Activated T-helper 1 cell treated with anti-CD3 and anti-CD28 coated beads, Interleukin-12 subunit alpha, Interleukin-12 subunit beta, Interleukin-2, Interleukin-4 antibody, amounts not matched to agents 30 ng/mL and 10 ng/mL and 1 ng/mL, durations not matched to agents 14 hours and 24 hours and 36 hours (primary cell): ENCODE measurements at regions of chr16 and their contacts with region 1.

Region 1: GRCh38 chr16:70438969-70439862 is at the start of gene ST3GAL2:
- DNase-seq: peak; percentile 92
- H3K4me3 Mint-ChIP-seq: peak within 1 kb of the TSS; percentile 98
- H3K27ac Mint-ChIP-seq: peak within 1 kb of the TSS; percentile 92
- H3K4me1 Mint-ChIP-seq: peaks cover 28% of the 10 kb centered on the region
- H3K27me3 Mint-ChIP-seq: no peaks in the 10 kb centered on the region
- total RNA-seq, gene ST3GAL2: 35.6 and 37.7 TPM in 2 replicates

Region 2: GRCh38 chr16:70289229-70290098 is 149.8 kb before region 1 on chr16 and contains the start of gene AARS1:
- intact Hi-C with region 1: loop called (anchors 2 kb)
- DNase-seq: peak; percentile 95
- H3K4me3 Mint-ChIP-seq: peak within 1 kb of the TSS; percentile 96
- H3K27ac Mint-ChIP-seq: peak within 1 kb of the TSS; percentile 99
- H3K4me1 Mint-ChIP-seq: peaks cover 23% of the 10 kb centered on the region
- H3K27me3 Mint-ChIP-seq: no peaks in the 10 kb centered on the region
- total RNA-seq, gene AARS1: 109 and 111 TPM in 2 replicates

Region 3: DNA sequence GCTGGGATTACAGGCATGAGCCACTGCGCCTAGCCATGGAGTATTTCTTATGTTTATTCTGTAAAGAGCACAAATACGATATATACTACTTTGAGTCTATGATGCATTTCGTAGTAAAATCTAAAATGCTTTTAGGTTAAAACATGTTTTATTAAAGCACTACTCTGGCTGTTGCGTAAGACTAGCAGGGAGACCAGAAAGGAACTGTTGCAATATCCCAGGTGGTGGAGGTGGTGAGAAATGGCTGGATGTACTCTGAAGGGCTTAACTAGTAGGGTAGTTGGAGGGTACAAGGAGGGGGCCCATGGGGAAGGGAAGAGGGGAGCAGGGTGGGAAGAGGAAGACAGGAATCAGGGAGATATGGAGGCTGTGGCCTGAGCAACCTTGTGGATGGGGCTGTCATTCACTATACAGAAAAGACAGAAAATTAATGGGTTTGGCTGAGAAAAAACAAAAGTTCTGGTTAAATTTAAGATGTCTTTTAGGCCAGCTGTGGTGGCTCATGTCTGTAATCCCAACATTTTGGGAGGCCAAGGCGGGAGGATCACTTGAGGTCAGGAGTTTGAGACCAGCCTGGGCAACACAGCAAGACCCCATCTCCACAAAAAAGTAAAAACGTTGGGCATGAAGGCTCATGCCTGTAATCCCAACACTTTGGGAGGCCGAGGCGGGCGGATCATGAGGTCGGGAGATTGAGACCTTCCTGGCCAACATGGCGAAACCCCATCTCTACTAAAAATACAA is 36.1 kb before region 1 on chr16:
- intact Hi-C with region 1: loop called (anchors 2 kb)
- DNase-seq: no peak
- H3K4me3 Mint-ChIP-seq: peak overlapping the region; percentile 10
- H3K27ac Mint-ChIP-seq: peak overlapping the region; percentile 92
- H3K4me1 Mint-ChIP-seq: peaks cover 43% of the 10 kb centered on the region
- H3K27me3 Mint-ChIP-seq: no peaks in the 10 kb centered on the region

Region 4: GRCh38 chr16:70454222-70455034 is 15.2 kb after region 1 on chr16 and contains the start of gene FCSK:
- intact Hi-C with region 1: loop called (anchors 1 kb)
- DNase-seq: peak; percentile 52
- H3K4me3 Mint-ChIP-seq: peak within 1 kb of the TSS; percentile 91
- H3K27ac Mint-ChIP-seq: peak within 1 kb of the TSS; percentile 83
- H3K4me1 Mint-ChIP-seq: peaks cover 21% of the 10 kb centered on the region
- H3K27me3 Mint-ChIP-seq: no peaks in the 10 kb centered on the region
- total RNA-seq, gene FCSK: 19.7 and 21.0 TPM in 2 replicates